ENCODE measurements at regions of chr14 and their contacts with region 1.

Region 1: GRCh38 chr14:91060351-91061055 is at the start of gene RPS6KA5:
- DNase-seq: peak; percentile 94
- CTCF ChIP-seq: no peak

Region 2: GRCh38 chr14:90940318-90940962 is 120.1 kb before region 1 on chr14:
- CTCF ChIA-PET with region 1: no interaction called
- POLR2A ChIA-PET with region 1: no interaction called
- DNase-seq: no peak
- CTCF ChIP-seq: no peak

Region 3: GRCh38 chr14:91047174-91047753 is 13.2 kb before region 1 on chr14:
- CTCF ChIA-PET with region 1: interaction called, 31 read pairs
- POLR2A ChIA-PET with region 1: no interaction called
- DNase-seq: no peak
- CTCF ChIP-seq: no peak

Region 4: GRCh38 chr14:91114079-91115065 is 53.9 kb after region 1 on chr14:
- CTCF ChIA-PET with region 1: interaction called, 13 read pairs
- POLR2A ChIA-PET with region 1: interaction called, 5 read pairs
- DNase-seq: peak; percentile 81
- CTCF ChIP-seq: no peak

Measured in GM10248 (cell line).